ENCODE measurements at regions of chr1 and their contacts with region 1.

Region 1: DNA sequence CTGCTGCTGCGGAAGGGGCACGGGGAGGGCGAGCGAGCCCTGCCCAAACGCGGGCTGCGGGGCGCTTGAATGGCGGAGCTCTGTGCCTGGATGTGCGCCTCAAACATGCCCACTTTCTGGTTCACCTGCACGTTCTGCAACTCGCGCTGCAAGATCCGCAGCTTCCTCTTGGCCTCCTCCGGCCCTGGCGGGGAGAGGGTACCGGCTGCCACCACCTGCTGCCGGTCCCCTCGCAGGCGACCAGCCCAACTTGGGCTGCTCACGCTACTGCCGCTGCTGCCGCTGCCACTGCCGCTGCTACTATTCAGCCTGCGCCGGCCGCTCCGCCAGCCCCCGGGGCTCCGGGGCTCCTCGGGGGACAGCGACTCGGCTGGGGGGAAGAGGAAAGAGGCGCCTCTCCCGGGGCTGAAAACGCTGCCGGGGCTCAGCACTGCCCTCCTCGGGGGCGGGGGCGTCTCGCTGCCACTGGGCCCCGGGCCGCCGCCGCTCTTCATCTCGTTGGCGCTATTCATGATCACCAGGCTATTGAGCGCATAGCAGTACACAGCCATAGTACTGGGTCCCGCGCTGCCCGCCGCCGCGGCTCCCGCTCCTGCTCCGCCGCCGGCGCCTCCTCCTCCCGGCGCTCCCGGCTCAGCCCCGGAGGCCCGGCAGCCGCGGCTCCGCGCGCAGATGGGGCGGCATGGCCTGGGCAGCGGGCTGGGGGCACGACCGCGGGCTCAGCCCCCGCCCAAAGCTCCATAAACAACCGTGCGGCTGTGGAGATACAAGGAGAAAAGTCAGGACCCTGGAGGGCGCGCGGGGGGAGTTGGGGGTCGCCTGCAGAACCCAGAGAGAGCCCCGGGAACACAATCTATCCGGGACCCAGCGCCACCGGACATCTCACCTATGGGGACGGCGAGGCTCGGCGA is 1.9 kb downstream of the ITPKB start:
- DNase-seq: peak; percentile 71 to 81
- ATAC-seq: peak; percentile 54
- H3K4me3 ChIP-seq: peak overlapping the region; percentile 16 to 69
- H3K27ac ChIP-seq: peak overlapping the region in 1 of 2 donors; percentile 2
- H3K4me1 ChIP-seq: no peaks in the 10 kb centered on the region
- H3K27me3 ChIP-seq: no peaks in the 10 kb centered on the region

Region 2: GRCh38 chr1:226547754-226548191 is 189.4 kb before region 1 on chr1:
- intact Hi-C with region 1: loop called in 1 of 2 experiments (anchors 5 kb)
- DNase-seq: peak; percentile 83 to 92
- ATAC-seq: peak; percentile 85
- H3K4me3 ChIP-seq: no peak overlapping the region
- H3K27ac ChIP-seq: no peak overlapping the region
- H3K4me1 ChIP-seq: no peaks in the 10 kb centered on the region
- H3K27me3 ChIP-seq: no peaks in the 10 kb centered on the region

Region 3: DNA sequence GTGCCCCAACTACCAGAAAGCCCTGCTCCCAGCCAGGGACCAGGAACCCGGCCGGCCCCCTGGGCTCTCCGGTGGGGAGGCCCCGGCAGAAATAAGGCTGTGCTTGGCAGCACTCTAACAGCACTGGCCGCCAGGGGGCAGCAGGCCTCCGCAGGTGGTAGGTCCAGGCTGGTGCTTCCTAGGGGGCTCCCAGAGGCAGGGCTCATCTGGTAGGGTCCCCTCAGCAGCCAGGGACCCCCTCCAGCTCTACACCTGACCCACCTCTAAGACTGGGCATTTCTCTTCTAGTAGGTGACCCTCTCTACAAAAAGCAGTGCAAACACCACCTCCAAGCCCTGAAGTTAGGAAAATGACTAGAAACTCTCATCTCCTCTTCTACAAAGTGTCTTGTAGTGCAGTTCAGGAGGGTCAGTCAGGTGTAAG is 103.0 kb before region 1 on chr1:
- intact Hi-C with region 1: loop called in 1 of 2 experiments (anchors 5 kb)
- DNase-seq: peak; percentile 85 to 96
- ATAC-seq: peak; percentile 87
- H3K4me3 ChIP-seq: no peak overlapping the region
- H3K27ac ChIP-seq: no peak overlapping the region
- H3K4me1 ChIP-seq: no peaks in the 10 kb centered on the region
- H3K27me3 ChIP-seq: no peaks in the 10 kb centered on the region

Region 4: DNA sequence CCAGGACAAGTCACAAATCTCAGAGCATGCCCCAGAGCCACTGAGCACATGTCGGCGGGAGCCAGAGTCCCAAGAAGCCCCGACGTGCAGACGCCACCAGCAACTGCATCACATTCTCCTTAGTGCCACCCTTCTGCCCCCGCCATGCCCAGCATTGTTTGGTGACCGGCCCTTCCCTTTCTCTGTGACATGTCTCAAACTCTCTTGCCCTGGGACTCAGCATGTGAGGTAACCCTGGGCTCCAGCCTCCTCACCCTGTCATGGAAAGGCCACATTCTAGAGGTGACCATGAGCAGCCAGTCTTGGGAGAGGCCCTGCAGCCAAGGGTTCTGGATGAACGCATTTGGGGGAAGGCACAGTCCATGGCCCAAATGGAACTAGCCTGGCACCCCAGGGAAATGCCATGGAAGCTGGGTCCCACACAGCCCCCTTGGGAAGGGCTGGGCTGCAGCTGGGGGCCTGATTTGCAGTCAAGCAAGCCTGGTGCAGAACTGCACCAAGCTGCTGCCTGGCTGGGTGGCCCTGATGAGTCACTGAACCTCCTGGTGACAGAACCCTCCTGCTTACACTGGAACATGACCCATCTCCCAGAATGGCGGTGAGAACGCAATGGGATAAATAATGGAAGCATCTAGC is 92.5 kb before region 1 on chr1:
- intact Hi-C with region 1: no loop called
- DNase-seq: peak; percentile 38 to 63
- ATAC-seq: no peak
- H3K4me3 ChIP-seq: no peak overlapping the region
- H3K27ac ChIP-seq: no peak overlapping the region
- H3K4me1 ChIP-seq: no peaks in the 10 kb centered on the region
- H3K27me3 ChIP-seq: no peaks in the 10 kb centered on the region

Region 5: GRCh38 chr1:226656601-226657277 is 80.4 kb before region 1 on chr1:
- intact Hi-C with region 1: loop called in 1 of 2 experiments (anchors 5 kb)
- DNase-seq: peak; percentile 78 to 80
- ATAC-seq: peak; percentile 15
- H3K4me3 ChIP-seq: no peak overlapping the region
- H3K27ac ChIP-seq: peak overlapping the region in 1 of 2 donors; percentile 28
- H3K4me1 ChIP-seq: peaks cover 0 to 5% of the 10 kb centered on the region in 2 donors
- H3K27me3 ChIP-seq: no peaks in the 10 kb centered on the region

Region 6: DNA sequence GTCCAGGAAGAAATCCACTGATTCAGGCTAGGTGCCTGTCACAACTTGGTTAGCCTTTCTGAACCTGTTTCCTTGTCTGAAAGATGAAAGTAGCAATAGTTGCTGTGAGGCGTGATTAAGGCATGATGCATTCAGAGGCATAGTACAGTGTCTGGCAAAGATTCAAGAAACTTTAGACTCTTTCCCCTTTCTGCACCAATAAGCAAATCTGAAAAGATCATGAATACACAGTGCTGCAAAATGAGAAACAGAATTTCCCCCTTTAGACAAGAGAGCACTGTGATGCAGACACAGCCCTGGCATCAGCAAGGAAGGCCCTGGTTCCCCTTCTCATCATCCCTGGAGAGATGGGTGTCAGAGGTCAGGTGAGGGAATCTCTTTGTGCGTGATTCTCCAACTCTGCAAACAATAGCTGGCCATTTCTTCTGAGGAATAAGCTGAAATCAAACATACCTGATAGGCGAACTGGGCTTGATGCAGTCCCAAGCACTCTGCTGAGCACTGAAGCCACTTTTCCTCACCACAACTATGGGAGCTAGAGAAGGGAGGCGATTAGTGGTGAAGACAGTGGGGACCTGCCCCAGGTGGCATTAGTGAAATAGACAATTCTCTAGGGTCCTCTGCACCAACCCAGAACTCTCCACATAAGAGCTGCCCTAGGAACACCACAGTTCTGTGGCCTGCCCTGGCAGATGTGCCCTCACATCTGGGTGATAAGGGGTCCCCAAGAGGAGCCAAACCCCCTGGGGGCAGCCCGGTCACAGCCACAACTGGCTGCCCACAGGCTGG is 39.8 kb before region 1 on chr1:
- intact Hi-C with region 1: loop called in 1 of 2 experiments (anchors 5 kb)
- DNase-seq: no peak
- ATAC-seq: no peak
- H3K4me3 ChIP-seq: no peak overlapping the region
- H3K27ac ChIP-seq: no peak overlapping the region
- H3K4me1 ChIP-seq: no peaks in the 10 kb centered on the region
- H3K27me3 ChIP-seq: no peaks in the 10 kb centered on the region

Region 7: GRCh38 chr1:226827968-226828513 is 90.9 kb after region 1 on chr1:
- intact Hi-C with region 1: loop called in 1 of 2 experiments (anchors 5 kb)
- DNase-seq: peak; percentile 99
- ATAC-seq: peak; percentile 98
- H3K4me3 ChIP-seq: no peak overlapping the region
- H3K27ac ChIP-seq: no peak overlapping the region
- H3K4me1 ChIP-seq: no peaks in the 10 kb centered on the region
- H3K27me3 ChIP-seq: no peaks in the 10 kb centered on the region